ENCODE measurements at regions of chr3 and their contacts with region 1.

Region 1: GRCh38 chr3:150528354-150528797 is 17.9 kb downstream of the SERP1 start:
- DNase-seq: no peak
- H3K4me3 ChIP-seq: no peak overlapping the region
- H3K27ac ChIP-seq: no peak overlapping the region
- H3K27me3 ChIP-seq: no peaks in the 10 kb centered on the region
- CTCF ChIP-seq: peak; percentile 41

Region 2: DNA sequence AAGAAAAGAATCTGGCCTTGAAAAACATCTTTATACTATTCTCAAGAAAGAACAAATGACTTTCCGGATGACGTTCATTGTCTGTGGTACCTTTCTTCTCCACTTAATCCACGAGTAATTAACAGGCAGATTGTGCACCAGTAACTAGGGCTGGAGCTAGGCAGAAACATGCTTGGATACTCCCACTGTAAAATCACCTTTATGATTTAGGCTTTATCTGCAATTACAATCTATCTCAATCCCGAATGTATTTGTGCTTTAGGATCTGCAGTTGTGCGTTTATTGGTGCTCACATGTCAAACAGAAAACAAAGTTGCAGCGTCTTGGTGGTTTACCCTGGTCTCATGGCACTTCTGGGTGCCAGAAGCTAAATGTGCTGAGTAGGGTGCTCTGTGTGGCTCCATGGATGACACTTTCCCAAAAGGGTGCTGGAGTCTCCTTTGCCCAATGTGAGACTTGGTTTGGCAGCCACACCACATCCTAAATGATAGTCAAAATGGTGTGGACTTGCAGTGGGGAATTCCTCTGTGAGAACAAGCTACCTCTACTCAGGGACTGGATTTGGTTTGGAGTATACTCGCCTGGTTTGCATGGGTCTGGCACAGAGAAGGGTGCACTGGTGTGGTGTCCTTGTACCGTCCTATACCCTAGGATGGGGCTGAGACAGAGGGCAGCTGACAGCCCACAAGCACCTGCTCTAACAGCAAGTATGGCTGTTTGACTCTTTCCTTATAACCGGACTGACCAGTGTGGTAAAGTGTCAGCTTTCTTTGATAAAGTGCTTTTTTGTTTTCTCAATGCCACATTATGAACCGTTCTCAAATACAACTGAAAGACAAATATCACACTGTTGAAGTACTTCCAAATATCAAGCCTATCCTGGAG is 10.2 kb after region 1 on chr3:
- CTCF ChIA-PET with region 1: interaction called, 11 read pairs
- POLR2A ChIA-PET with region 1: no interaction called
- DNase-seq: no peak
- H3K4me3 ChIP-seq: no peak overlapping the region
- H3K27ac ChIP-seq: no peak overlapping the region
- H3K27me3 ChIP-seq: no peaks in the 10 kb centered on the region
- CTCF ChIP-seq: no peak

Region 3: GRCh38 chr3:150544726-150545125 is 16.4 kb after region 1 on chr3:
- CTCF ChIA-PET with region 1: interaction called, 11 read pairs
- POLR2A ChIA-PET with region 1: interaction called, 9 read pairs
- DNase-seq: no peak
- H3K4me3 ChIP-seq: peak overlapping the region; percentile 92
- H3K27ac ChIP-seq: no peak overlapping the region
- H3K27me3 ChIP-seq: no peaks in the 10 kb centered on the region
- CTCF ChIP-seq: no peak